ENCODE measurements at regions of chr6 and their contacts with region 1.

Region 1: GRCh38 chr6:7541175-7542064 is at the start of gene DSP:
- DNase-seq: peak; percentile 62
- ATAC-seq: peak; percentile 74
- total RNA-seq, gene DSP: 179 to 198 TPM

Region 2: GRCh38 chr6:7467007-7467897 is 74.2 kb before region 1 on chr6:
- intact Hi-C with region 1: loop called in 1 of 2 experiments (anchors 2 kb)
- DNase-seq: peak; percentile 48
- ATAC-seq: peak; percentile 32 to 50